ENCODE measurements at regions of chr12 and their contacts with region 1.

Region 1: DNA sequence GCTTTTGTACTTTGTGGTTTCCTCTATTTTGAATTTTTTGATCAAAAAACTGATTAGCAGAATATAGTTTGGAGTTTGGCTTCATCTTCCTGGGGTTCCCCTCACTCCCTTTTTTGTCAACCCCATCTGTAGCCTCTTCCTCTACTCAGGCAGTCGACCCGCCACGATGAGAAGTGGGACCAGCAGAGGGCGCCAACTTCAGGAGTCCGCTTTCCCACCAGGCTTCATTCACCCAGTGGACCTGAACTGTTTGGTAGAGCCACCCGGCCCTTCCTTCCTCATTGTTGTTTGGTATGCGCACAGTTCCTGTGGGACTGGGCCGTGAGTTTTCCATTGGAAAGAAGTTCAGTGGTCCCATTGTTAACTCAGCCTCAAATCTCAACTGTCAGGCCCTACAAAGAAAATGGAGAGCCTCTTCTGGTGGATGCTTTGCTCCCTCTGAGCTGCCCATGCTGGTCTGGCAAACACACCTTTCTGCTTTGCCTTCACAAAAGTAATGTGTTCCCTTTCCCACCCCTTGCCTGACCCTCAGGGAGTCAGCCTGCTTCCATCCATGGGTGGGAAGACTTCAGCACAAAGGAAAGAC is 21.7 kb downstream of the TMBIM6 start:
- DNase-seq: peak; percentile 72
- H3K4me3 ChIP-seq: no peak overlapping the region
- H3K27ac ChIP-seq: no peak overlapping the region
- H3K4me1 ChIP-seq: no peaks in the 10 kb centered on the region
- H3K27me3 ChIP-seq: no peaks in the 10 kb centered on the region
- CTCF ChIP-seq: peak; percentile 82
- EP300 ChIP-seq: no peak
- RAD21 ChIP-seq: peak; percentile 36

Region 2: DNA sequence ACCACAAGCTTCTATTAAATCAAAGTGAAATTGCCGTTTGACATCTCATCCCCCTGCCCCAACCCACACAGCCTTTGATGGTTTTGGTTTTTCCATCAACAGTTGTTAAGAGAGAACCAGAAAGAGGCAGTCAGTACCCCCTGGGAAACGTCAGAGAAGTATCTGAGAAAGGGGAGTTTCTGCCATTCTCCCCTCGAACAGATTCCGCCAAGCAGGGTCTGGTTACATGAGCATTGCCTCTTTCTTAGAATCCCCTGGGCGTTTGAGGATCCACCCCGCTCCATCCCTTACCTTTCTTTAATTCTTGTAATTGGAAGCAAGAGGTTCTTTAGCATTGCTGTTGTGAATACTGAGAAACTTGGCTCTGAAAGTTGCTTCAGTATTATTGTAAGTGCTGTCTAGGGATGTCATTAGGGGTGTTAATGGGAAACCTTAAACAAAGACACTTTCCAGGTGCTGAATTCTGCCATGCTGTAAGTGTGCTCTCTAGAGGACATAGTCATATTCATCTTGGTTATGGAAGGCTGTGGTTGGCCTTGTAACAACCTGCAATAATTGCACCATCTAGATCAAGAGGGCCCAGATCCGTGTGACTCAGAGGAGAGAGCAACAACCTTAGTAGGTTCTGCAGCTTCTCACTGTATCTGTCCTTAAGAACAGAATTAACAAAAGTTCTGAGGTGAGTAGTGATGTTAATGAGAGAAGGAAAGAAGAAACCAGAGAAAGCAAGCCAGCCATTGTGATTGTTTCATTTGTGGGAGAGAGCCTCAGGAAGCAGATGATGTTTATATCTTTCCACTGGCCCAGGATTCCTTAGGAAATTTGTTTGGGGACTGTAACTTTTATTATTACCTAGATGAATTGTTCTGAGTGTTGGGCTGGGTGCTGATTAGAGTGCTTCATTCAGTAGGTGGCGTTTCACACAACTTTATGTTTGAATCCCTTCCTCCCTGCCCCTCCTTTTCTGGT is 12.8 kb before region 1 on chr12:
- CTCF ChIA-PET with region 1: interaction called, 22 read pairs
- POLR2A ChIA-PET with region 1: no interaction called
- DNase-seq: no peak
- H3K4me3 ChIP-seq: no peak overlapping the region
- H3K27ac ChIP-seq: no peak overlapping the region; a peak in 1 of 4 replicates
- H3K4me1 ChIP-seq: peaks cover 2 to 11% of the 10 kb centered on the region in 2 experiments; a peak in 2 of 4 replicates
- H3K27me3 ChIP-seq: no peaks in the 10 kb centered on the region
- CTCF ChIP-seq: no peak
- EP300 ChIP-seq: no peak
- RAD21 ChIP-seq: no peak

Region 3: DNA sequence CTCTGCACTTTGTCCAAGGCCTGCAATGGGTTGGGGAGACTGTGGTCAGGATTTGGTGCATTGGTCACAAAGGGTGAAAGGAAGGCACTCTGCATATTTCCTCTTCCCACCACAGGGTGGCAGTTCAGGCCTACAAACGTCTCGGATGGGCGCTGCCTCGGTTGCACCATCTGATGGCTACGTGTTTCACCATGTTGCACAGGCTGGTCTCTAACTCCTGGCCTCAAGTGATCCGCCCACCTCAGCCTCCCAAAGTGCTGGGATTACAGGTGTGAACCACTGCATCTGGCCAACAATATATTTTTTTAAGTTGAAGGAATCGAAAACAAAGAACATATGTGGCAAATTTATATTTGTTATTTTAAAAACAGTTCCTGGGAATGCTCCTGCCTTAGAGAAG is 13.3 kb after region 1 on chr12:
- CTCF ChIA-PET with region 1: interaction called, 14 read pairs
- POLR2A ChIA-PET with region 1: no interaction called
- DNase-seq: peak; percentile 79
- H3K4me3 ChIP-seq: peak overlapping the region in 1 of 2 experiments; percentile 9; a peak in 1 of 4 replicates
- H3K27ac ChIP-seq: no peak overlapping the region
- H3K4me1 ChIP-seq: no peaks in the 10 kb centered on the region
- H3K27me3 ChIP-seq: no peaks in the 10 kb centered on the region
- CTCF ChIP-seq: peak; percentile 84
- EP300 ChIP-seq: no peak
- RAD21 ChIP-seq: peak; percentile 91

Region 4: DNA sequence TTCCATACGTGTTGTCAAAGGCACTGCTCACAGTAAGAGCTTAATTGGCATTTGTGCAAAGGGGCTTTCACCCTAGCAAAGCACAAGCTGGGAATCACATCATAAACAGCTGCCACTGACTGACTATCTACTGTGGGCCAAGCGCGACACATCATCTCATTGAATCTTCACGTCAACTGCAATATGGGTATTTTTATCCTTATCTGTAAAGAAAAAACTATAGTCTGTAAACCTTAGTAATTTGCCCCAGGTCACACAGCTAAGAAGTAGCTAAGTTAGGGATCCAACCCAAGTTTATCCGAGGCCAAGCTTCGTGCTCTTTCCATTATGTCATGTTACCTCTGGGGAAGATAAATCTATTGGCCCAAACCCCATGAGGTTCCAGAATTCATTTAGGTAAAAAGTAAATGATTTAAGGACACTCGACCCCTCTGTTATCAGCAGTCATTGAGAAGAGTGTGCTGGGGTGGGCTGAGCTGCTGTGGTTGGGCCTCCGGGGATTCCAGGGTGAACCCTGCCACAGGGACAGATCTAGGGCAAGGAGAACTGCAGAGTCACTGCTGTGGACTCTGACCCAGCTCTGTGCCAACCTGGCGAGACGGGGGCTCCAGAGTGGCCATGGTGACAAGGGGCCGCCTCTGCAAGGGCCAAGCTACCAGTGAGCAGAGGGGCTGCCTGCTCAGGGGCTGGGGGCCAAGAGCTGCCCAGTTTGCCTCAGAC is 37.5 kb after region 1 on chr12:
- CTCF ChIA-PET with region 1: interaction called, 14 read pairs
- POLR2A ChIA-PET with region 1: no interaction called
- DNase-seq: no peak
- H3K4me3 ChIP-seq: no peak overlapping the region
- H3K27ac ChIP-seq: no peak overlapping the region
- H3K4me1 ChIP-seq: no peaks in the 10 kb centered on the region
- H3K27me3 ChIP-seq: no peaks in the 10 kb centered on the region
- CTCF ChIP-seq: no peak
- EP300 ChIP-seq: no peak
- RAD21 ChIP-seq: no peak

Region 5: DNA sequence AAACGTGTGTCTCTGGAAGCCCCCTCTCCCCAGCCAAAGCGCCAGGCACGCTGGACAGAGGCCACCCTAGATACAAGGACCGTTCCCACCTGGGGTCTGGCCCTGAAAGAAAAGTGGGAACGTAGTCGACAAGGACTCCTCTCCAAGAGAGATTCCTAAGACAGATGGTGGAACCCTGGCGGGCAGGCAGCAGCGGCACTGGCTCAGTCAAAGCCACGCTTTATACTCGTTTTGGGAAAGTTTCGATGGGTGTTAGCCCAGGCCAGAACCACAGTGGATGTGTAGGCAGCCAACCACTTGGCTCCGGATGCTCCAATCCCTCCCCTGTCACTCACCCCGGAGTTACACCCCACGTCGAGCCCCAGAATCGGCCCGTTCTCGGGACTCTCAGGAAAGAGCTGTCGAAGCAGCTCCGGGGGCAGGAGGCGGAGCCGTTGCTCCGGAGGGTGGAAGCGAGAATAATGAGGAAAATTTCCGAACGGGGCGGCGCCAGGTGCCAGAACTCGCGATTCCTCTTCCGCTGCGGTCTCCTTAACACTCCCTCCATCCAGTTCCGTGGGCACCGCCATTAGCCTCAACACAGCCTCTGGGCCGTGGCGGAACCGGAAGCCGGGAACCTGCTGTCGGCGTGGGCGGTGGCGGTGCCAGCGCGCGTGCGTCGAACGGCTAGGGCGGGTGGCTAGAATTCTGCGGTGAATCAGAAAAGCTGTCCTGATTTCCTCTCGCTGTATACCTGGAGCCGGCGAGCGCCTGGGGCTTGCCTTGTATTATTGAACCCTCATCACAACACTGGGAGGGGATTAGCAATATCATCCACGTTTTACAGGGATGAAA is 79.6 kb after region 1 on chr12 and contains the start of gene BCDIN3D:
- CTCF ChIA-PET with region 1: interaction called, 15 read pairs
- POLR2A ChIA-PET with region 1: no interaction called
- DNase-seq: peak; percentile 92
- H3K4me3 ChIP-seq: peak within 1 kb of the TSS; percentile 62 to 86
- H3K27ac ChIP-seq: peak within 1 kb of the TSS; percentile 92 to 94
- H3K4me1 ChIP-seq: peaks cover 11 to 18% of the 10 kb centered on the region in 2 experiments; a peak in 3 of 4 replicates
- H3K27me3 ChIP-seq: no peaks in the 10 kb centered on the region; the same call in 1 of the 2 replicates
- CTCF ChIP-seq: no peak
- EP300 ChIP-seq: no peak
- RAD21 ChIP-seq: no peak
- polyA plus RNA-seq, gene BCDIN3D: 2.3 and 3.8 TPM in 2 replicates